Activated naive CD4-positive, alpha-beta T cell treated with anti-CD3 and anti-CD28 coated beads for 36 hours (primary cell): ENCODE measurements at regions of chr4 and their contacts with region 1.

Region 1: GRCh38 chr4:129641179-129641578 is 545.2 kb downstream of the C4orf33 start:
- DNase-seq: peak; percentile 52
- H3K4me3 Mint-ChIP-seq: no peak overlapping the region
- H3K27ac Mint-ChIP-seq: no peak overlapping the region
- H3K4me1 Mint-ChIP-seq: no peaks in the 10 kb centered on the region
- H3K27me3 Mint-ChIP-seq: no peaks in the 10 kb centered on the region

Region 2: DNA sequence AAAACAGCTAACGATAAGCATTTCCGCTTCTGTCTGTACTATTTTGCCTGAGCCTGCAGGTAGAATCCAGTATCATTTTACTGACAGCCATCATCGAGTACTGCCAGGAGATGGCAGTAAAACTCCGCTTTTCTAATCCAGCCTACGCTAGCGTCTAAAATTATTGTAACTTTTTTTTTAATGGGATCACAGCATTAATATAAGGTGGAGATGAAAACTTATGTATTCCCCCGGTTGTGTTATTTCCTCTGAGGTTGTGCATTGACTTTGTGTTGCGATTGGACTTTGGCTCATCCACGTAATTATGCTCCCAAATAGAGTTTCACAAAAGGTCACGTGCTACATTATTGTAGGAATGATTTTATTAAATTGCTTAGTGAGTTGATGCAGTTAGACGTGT is 297.1 kb before region 1 on chr4:
- CTCF ChIA-PET with region 1: interaction called, 4 read pairs
- intact Hi-C with region 1: loop called (anchors 1 kb)
- DNase-seq: peak; percentile 37
- H3K4me3 Mint-ChIP-seq: no peak overlapping the region
- H3K27ac Mint-ChIP-seq: no peak overlapping the region
- H3K4me1 Mint-ChIP-seq: no peaks in the 10 kb centered on the region
- H3K27me3 Mint-ChIP-seq: peaks cover 17% of the 10 kb centered on the region

Region 3: DNA sequence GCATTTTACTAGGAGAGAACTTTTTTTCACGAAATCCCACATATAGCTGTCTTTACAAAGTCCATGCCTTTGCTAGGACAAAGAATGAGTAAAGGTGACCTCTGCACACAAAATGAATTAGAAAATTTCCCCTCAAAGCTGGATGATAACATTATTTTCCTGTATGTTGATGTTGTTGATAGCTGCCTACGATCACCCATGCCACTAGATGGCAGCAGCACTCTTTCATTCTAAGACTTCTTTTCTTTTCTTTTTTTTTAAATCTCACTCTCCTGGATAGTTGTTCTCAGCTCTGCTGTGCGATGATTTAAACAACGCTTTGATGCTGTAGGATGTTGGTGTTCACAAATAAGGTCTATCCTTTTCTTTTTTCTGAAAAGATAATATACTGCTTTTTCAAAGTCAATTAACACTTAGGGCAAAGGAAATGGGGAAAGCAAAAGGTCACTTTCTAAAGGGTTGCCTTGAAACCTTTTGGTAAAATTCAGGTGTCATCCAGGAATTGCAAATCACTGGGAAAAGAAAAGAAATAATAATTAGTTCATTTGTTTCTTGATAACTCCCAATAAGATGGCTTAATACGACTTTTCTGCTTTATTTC is 278.4 kb before region 1 on chr4:
- CTCF ChIA-PET with region 1: interaction called, 8 read pairs
- intact Hi-C with region 1: loop called (anchors 1 kb)
- DNase-seq: peak; percentile 61
- H3K4me3 Mint-ChIP-seq: no peak overlapping the region
- H3K27ac Mint-ChIP-seq: no peak overlapping the region
- H3K4me1 Mint-ChIP-seq: no peaks in the 10 kb centered on the region
- H3K27me3 Mint-ChIP-seq: peaks cover 8% of the 10 kb centered on the region

Region 4: DNA sequence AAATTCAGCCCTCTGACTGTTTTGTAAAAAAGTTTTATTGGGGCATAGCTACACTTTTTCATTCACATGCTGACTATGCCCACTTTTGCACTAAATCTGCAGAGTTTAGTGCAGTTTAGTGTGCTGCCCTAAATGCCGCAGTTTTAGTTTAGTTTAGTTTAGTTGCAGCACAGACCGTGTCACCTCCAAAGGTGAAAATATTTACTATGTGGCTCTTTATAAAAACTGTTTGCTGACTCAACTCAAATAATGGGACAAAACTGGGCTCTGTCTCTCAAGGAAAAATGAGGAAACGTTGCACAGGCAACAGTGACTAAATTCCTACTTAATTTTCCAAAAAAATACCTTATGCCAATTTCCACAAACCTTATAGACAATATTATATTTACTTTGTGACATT is 231.1 kb before region 1 on chr4:
- CTCF ChIA-PET with region 1: no interaction called
- intact Hi-C with region 1: loop called (anchors 5 kb)
- DNase-seq: no peak
- H3K4me3 Mint-ChIP-seq: no peak overlapping the region
- H3K27ac Mint-ChIP-seq: no peak overlapping the region
- H3K4me1 Mint-ChIP-seq: no peaks in the 10 kb centered on the region
- H3K27me3 Mint-ChIP-seq: no peaks in the 10 kb centered on the region

Region 5: DNA sequence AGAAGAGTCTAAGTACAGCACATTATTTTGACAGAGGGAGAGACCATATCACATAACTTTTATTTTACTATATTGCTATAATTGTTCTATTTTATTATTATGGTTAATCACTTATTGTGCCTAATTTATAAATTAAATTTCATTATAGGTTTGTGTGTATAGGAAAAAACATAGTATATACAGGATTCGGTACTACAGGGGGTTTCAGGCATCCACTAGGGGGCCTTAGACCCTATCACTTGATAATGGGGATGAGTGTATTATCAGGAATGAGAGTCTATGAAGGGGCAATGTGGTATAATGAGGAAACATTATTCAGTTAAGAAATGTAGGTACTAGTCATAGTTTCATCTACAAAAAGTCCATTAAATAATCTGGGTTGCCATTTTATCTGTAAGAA is 287.9 kb after region 1 on chr4:
- CTCF ChIA-PET with region 1: no interaction called
- intact Hi-C with region 1: no loop called
- DNase-seq: no peak
- H3K4me3 Mint-ChIP-seq: no peak overlapping the region
- H3K27ac Mint-ChIP-seq: no peak overlapping the region
- H3K4me1 Mint-ChIP-seq: no peaks in the 10 kb centered on the region
- H3K27me3 Mint-ChIP-seq: no peaks in the 10 kb centered on the region